ENCODE measurements at regions of chr6 and their contacts with region 1.

Region 1: DNA sequence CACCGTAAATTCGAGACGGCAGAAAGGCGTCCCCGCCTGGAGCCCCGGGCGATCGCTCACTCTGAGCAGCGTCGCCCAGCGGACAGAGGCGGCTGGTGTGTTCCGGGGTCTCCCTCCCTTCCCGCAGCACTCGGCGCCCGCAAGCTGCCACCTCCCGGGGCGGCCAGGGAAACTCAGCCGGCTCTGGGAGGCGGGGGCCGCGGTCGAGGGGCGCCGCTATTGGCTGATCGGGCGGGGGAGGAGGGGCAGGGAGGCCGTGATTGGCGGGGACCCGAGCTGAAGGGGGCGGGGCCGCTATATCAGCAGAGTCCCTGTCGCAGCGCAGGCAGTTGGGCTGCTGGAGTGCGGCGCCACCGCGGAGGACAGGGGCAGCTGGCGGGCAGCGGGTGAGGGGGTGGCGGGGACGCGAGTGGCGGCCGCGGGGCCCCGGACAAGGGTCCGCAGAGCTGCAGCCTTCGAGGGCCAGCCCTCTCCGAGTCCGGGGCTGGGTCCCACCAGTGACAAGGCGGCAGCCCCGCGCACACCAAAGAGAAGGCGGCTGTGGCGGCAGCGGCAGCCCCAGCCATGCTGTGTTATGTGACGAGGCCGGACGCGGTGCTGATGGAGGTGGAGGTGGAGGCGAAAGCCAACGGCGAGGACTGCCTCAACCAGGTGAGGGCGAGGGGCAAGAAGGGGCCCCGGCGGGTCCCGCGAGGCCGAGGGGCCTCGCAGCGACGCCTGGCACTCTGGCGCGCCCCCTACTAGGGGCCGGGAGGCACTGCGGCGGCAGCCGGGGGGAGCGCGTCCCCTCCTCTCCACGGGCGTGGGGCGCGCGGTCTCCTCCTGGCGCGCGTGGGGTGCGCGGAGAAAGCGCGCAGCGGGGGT is at the start of gene MYLIP:
- DNase-seq: peak; percentile 99
- H3K4me3 ChIP-seq: peak within 1 kb of the TSS; percentile 91 to 100 (median 98)
- H3K27ac ChIP-seq: peak within 1 kb of the TSS; percentile 94 to 100 (median 96)
- H3K4me1 ChIP-seq: peaks cover 0 to 35% (median 23%) of the 10 kb centered on the region in 4 donors
- H3K27me3 ChIP-seq: no peaks in the 10 kb centered on the region
- CTCF ChIP-seq: peak; percentile 63 to 88 (median 78)
- EP300 ChIP-seq: peak in 1 of 4 donors; percentile 24
- POLR2A ChIP-seq: peak; percentile 100
- total RNA-seq, gene MYLIP: 18.0 to 50.0 (median 41.3) TPM

Region 2: DNA sequence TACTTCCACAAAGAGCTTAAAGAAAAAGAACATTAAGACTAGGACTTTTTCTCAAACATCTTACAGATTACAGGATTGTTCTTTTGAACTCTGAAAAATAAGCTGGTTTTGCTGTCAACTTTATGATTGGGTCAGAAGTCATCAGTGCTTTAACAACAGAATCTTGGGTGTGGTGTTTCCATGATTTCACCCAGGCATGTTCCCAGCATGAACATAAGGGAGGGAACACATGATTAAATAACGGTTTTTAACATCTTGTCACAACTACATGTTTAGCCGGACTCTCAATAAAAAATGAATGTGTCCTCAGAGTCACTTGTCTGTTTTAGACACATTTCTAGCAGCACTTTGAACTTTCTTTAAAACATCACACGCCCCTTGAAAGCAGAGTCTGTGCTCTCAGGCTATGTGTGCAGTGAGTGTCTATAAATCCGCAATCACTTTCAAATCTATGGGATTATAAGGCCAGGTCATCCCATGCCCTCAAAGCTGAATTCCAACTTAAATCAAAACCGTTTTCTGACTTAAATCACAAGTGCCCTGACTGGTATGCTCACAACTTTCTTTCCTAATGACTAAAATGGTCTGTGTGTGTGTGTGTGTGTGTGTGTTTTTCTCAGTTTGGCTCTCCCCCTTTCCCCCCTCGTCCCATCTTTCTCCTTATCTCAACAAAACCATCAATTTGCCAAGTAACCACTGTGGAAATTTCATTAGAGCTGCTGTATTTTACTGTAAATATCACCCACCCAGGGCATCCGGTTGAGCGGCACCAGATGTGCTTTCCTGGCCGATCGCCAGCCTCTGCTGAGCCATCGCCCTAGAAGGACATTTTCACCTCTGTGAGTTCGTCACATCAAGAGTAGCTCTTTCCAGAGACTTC is 249.4 kb before region 1 on chr6:
- intact Hi-C with region 1: loop called (anchors 10 kb)
- DNase-seq: peak; percentile 92
- H3K4me3 ChIP-seq: no peak overlapping the region
- H3K27ac ChIP-seq: peak overlapping the region in 3 of 4 donors; percentile 58 to 75 (median 73)
- H3K4me1 ChIP-seq: peaks cover 0 to 17% (median 16%) of the 10 kb centered on the region in 4 donors
- H3K27me3 ChIP-seq: no peaks in the 10 kb centered on the region
- CTCF ChIP-seq: no peak
- EP300 ChIP-seq: peak in 1 of 4 donors; percentile 48
- POLR2A ChIP-seq: no peak

Region 3: GRCh38 chr6:15987569-15987968 is 141.4 kb before region 1 on chr6:
- intact Hi-C with region 1: no loop called
- DNase-seq: no peak
- H3K4me3 ChIP-seq: no peak overlapping the region
- H3K27ac ChIP-seq: no peak overlapping the region
- H3K4me1 ChIP-seq: no peaks in the 10 kb centered on the region
- H3K27me3 ChIP-seq: no peaks in the 10 kb centered on the region
- CTCF ChIP-seq: no peak
- EP300 ChIP-seq: no peak
- POLR2A ChIP-seq: no peak

Region 4: GRCh38 chr6:16157909-16158308 is 28.9 kb after region 1 on chr6:
- intact Hi-C with region 1: no loop called
- DNase-seq: peak; percentile 82
- H3K4me3 ChIP-seq: no peak overlapping the region
- H3K27ac ChIP-seq: no peak overlapping the region
- H3K4me1 ChIP-seq: peaks cover 0 to 14% (median 8%) of the 10 kb centered on the region in 4 donors
- H3K27me3 ChIP-seq: no peaks in the 10 kb centered on the region
- CTCF ChIP-seq: no peak
- EP300 ChIP-seq: no peak
- POLR2A ChIP-seq: no peak

Region 5: DNA sequence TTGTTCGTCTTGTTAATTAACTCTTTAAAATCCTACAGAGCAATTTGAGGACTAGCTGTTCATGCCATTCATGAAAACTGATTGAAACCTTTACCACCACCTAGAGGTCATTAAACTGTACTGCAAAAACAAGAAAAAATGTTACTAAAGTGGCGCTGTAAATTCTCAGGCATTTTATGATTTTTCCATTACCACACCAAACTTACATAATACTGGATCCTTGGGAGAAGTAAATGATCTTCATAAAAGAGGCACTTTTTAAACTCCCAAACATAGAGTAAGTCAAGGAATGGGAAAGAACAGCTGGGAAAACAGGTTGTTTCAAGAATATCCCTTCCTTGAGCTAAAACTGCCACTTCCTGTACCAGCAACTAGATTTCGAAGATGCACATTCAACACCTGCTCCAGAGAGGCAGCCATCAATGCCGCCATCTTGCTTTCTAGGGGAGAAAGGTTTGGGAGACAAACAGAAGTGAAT is 54.2 kb after region 1 on chr6:
- intact Hi-C with region 1: loop called (anchors 5 kb)
- DNase-seq: no peak
- H3K4me3 ChIP-seq: no peak overlapping the region
- H3K27ac ChIP-seq: peak overlapping the region in 1 of 4 donors; percentile 38
- H3K4me1 ChIP-seq: peaks cover 0 to 12% (median 4%) of the 10 kb centered on the region in 4 donors
- H3K27me3 ChIP-seq: no peaks in the 10 kb centered on the region
- CTCF ChIP-seq: peak; percentile 23 to 79 (median 64)
- EP300 ChIP-seq: no peak
- POLR2A ChIP-seq: no peak

Region 6: DNA sequence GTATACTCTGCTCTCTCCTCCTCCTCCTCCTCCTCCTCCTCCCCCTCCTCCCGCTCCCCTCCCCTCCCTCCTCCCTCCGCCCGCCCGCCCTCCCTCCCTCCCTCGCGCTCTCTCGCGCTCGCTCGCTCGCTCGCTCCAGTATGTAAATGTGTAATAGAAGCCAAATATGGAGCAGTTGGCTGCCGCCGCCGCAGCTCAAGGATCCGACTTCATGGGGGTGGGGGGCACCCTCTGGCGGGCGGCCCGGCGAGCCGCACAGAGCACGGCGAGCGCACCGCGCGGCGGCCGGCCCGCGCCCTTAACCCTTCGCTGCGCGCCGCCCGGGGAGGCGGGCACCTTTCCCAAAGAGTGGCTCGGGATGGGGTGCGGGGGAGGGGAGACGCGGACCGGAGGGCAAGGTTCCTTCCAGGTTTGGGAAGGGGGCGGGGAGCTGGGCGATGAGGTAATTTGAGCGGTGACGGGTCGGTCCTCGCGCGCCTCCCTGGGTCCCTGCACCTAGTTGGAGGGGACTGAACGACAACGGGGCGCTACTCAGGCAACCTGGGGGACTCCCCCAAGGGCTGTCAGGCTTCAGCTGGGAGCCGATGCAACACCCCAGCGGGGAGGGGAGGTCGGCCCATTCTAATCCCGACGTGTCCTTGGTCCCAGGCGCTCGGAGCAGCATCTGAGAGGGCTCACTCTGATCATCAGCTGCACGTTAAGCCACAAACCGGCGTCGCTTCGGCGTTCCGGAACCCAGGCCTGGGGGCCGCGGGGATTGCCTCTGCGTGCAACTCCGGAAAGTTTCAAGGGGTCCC is 632.7 kb after region 1 on chr6:
- intact Hi-C with region 1: loop called (anchors 5 kb)
- DNase-seq: peak; percentile 95
- H3K4me3 ChIP-seq: peak overlapping the region; percentile 80 to 96 (median 84)
- H3K27ac ChIP-seq: peak overlapping the region; percentile 97 to 99 (median 98)
- H3K4me1 ChIP-seq: peaks cover 0 to 64% (median 51%) of the 10 kb centered on the region in 4 donors
- H3K27me3 ChIP-seq: no peaks in the 10 kb centered on the region
- CTCF ChIP-seq: peak in 1 of 4 experiments; percentile 23
- EP300 ChIP-seq: peak in 1 of 4 donors; percentile 6
- POLR2A ChIP-seq: peak; percentile 45 to 52